GM10248 (cell line): ENCODE measurements at regions of chr12 and their contacts with region 1.

Region 1: DNA sequence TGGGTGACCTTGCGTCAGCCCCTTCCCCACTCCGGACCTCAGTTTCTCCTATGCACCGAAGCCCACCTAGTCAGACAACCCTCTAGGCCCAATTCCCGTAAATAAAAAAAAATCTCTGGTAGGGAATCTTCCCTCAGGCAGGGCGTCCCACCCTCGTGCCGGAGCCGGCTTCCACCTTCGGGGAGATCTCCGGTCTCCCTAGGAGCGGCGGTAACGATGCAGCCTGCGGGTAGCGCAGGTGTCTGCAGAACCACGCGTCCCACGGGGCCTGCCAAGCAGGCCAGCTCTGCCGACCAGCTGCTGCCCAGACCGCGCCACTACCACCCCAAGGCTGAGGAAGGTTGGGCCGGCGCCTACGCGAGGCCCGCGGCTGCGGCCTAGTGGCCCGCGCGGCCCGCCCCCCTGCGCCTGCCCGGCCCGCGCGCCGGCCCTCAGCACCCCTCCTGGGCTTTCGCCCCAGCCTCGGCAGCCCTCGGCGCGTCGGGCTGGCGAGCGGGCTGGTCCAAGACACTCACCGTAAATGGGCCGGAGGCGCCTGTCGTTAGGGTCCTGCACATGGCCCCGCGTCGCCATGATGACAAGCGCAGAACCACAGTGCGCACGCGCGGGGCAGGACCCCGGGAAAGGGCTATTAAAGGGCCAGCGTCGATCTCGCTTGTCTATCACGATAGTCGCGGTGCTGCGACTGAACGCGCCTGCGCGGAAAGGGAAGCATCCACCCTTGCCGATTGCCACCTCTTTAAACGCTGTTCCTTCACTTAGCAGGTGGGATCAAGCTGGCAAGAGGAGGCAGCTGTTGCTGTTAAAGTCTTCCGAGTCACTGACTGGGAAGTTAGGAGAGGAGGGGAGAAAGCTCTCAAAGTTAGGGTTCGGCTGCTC is at the start of gene NAA25:
- DNase-seq: peak; percentile 90
- CTCF ChIP-seq: no peak

Region 2: GRCh38 chr12:111942557-111942956 is 165.9 kb before region 1 on chr12:
- CTCF ChIA-PET with region 1: no interaction called
- POLR2A ChIA-PET with region 1: no interaction called
- DNase-seq: no peak
- CTCF ChIP-seq: no peak

Region 3: DNA sequence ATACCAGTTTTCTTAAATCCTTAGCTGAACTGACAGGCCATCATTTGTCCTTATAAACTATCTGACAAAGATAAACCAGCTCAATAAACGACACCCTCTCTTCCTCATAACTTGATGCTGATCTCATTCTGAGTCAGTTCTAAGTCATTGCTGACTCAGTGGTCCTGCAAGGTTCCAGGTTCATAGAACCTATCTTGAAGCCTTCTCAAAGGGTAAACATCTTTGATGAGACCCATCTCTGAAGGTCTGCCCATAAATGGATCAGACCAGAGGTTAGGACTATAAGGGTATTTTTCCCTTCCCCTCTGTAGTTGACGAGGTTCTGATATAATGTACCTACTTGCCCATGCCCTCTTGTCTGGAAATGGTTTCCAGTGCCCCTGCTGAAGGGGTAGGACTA is 11.8 kb before region 1 on chr12:
- CTCF ChIA-PET with region 1: interaction called, 10 read pairs
- POLR2A ChIA-PET with region 1: interaction called, 4 read pairs
- DNase-seq: no peak
- CTCF ChIP-seq: no peak

Region 4: DNA sequence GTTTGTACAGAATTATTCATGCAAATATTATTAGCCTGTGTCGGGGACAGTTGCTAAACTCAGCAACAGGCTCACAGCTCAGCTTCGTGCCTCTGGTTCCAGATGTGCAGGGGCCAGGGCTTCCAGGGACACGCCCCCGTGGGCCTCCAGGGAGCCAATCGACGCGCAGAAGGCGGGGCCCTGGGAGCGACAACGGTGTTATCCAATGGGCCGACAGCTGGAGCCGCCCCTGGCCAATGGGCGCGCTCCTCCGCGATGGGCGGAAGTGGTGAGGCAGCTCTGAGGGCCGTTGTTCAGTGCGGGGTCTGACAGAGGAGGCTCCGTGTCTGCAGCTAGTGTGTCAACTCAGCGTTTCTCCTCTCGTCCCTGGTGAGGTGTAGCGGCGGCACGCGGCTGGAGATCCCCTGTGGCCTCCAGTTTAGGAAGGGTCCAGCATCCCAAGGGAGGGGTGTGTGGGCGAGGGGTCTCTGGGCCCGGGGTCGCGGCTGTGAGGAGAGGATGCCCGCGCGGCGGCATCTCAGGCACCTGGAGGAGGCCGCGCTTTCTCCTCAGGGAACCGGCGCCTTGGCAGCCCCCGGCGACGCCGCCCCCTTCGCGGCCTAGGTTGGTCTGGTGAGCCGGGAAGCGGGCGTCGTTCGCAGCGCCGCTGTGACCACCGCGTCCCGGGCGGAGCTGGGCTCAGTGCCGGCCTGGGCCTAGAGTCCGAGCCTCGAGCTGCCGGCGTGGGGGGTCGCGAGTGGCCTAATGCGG is 17.0 kb after region 1 on chr12 and contains the start of gene TRAFD1:
- CTCF ChIA-PET with region 1: interaction called, 10 read pairs
- POLR2A ChIA-PET with region 1: interaction called, 10 read pairs
- DNase-seq: peak; percentile 99
- CTCF ChIP-seq: no peak

Region 5: GRCh38 chr12:112656140-112656539 is 547.7 kb after region 1 on chr12:
- CTCF ChIA-PET with region 1: no interaction called
- POLR2A ChIA-PET with region 1: no interaction called
- DNase-seq: no peak
- CTCF ChIP-seq: no peak